ENCODE measurements at regions of chr9 and their contacts with region 1.

Region 1: DNA sequence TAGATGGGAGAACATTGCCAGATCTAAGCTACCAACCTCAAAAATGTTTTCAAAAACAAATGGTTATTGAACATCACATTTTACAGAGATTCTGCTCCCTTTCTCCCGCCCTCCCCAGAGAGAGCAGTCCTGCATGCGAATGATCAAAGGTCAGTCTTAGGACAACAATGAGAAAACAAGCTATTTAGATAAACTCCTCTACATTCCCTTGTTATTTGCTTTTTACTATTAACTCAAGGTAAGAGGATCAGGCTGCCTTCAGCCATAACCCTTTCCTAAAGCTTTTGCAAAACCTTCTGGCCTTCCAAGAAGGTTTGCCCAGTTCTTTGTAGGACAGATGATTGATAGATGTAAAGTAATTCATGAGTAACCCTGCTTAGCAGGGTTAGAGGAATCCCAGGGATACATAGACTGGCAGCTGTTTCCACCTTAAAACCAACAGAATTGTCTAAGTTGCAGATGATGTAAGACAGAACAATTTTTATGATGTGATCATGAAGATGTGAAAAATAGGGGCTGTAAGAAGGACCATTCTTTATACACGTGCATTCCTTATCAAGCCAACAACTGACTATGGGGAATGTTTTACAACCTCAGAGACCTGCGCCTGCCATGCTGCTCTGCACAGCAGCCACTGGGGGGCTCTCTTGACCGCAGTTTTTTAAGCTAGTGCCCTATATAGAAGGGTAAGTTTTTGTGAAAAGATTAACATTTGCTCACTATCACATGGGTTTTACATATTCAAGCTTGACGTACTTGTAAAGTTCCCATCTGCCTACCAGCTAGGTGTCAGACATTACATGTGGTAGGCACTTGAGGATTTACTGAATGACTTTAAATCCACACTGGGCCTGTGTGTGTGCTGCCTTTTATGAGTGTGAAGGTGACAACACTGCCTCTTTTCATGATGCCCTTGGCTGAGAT is 2.3 kb upstream of the ZNF782 start:
- DNase-seq: no peak
- H3K4me3 ChIP-seq: no peak overlapping the region
- H3K27me3 ChIP-seq: no peaks in the 10 kb centered on the region
- CTCF ChIP-seq: peak; percentile 91

Region 2: GRCh38 chr9:96875461-96876364 is 19.1 kb after region 1 on chr9:
- CTCF ChIA-PET with region 1: interaction called, 35 read pairs
- POLR2A ChIA-PET with region 1: no interaction called
- DNase-seq: no peak
- H3K4me3 ChIP-seq: peak overlapping the region; percentile 50
- H3K27me3 ChIP-seq: peaks cover 25% of the 10 kb centered on the region
- CTCF ChIP-seq: peak; percentile 22; the same call in 1 of the 2 replicates

Region 3: DNA sequence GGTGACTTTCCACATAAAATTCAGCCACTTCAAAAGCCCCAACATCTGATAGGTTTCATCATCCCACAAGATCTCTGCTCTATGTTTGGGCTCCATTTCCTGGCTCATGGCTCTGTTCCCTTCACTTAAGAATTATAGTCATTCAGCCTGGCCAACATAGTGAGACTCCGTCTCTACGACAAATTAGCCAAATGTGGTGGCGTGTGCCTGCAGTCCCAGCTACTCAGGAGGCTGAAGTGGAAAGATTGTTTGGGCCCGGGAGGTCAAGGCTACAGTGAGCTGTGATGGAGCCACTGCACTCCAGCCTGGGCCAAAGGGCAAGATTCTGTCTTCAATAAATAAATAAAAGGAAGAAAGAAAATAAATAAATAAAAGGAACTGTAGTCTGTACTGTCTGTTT is 240.2 kb after region 1 on chr9:
- CTCF ChIA-PET with region 1: no interaction called
- POLR2A ChIA-PET with region 1: no interaction called
- DNase-seq: no peak
- H3K4me3 ChIP-seq: no peak overlapping the region
- H3K27me3 ChIP-seq: no peaks in the 10 kb centered on the region
- CTCF ChIP-seq: no peak

Region 4: DNA sequence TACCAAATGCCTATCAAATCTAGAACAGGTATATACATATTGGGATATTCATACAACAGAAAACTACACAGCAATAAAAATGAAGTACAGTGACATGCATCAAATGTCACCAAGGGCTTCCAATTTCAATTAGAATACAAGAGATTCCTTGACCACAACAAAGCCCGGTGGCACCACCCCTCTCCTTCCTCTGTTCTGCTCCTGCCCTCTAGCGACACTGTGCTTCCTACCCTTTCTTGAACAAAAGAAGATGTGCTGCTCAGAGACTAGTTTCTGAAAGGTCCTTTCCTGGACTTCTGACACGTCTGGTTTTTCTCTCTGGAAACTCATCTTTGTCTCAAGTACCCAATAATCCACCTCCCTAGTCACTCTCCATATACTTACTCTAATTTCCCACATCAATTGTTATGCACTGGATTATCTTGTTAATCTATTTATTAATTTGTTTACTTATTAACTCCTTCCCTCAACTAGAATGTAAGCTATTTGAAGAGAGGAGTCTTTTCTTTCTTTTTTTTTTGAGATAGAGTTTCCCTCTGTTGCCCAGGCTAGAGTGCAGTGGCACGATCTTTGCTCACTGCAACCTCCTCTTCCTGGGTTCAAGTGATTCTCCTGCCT is 252.7 kb after region 1 on chr9:
- CTCF ChIA-PET with region 1: interaction called, 15 read pairs
- POLR2A ChIA-PET with region 1: no interaction called
- DNase-seq: no peak
- H3K4me3 ChIP-seq: no peak overlapping the region
- H3K27me3 ChIP-seq: no peaks in the 10 kb centered on the region
- CTCF ChIP-seq: peak; percentile 48

Region 5: DNA sequence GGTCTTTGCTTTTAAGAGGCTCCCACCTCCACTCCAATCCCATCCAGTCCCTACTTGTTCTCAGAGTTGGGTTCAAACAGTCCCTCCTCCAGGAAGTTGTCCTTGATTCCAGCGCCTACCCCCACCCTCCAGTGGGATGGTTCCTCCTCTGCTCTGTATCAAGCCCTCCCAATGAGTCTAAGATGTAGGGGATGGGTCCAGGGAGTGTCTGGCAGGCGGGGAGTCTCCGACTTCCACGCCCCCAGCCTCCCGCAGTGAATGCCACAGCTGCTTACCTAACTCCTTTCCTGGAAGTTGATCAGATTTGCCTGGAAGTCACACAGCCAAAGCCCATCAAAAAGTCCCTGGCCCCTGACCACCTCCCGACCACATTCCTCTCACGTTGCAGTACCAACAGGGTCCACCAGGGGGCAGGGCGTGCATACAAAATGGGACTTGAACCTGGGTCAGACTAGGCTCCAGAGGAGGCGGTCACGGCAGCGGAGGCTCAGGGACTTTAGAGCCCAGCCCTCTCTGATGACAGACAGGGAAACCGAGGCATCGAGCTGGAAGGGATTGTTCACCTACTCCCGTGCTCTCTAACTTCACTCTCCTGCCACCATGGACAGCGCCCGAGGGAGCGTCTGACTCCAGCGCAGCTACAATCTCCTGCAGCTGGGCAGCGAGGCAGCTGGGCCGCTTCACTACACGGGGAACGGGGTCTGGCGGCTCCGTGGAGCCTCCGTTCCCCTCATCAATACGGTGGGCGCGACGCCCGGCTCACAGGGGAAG is 530.3 kb after region 1 on chr9:
- CTCF ChIA-PET with region 1: interaction called, 15 read pairs
- POLR2A ChIA-PET with region 1: no interaction called
- DNase-seq: no peak
- H3K4me3 ChIP-seq: no peak overlapping the region
- H3K27me3 ChIP-seq: peaks cover 2% of the 10 kb centered on the region
- CTCF ChIP-seq: peak; percentile 99

Region 6: GRCh38 chr9:97398999-97399758 is 542.6 kb after region 1 on chr9:
- CTCF ChIA-PET with region 1: interaction called, 39 read pairs
- POLR2A ChIA-PET with region 1: no interaction called
- DNase-seq: no peak
- H3K4me3 ChIP-seq: no peak overlapping the region
- H3K27me3 ChIP-seq: no peaks in the 10 kb centered on the region; the same call in 1 of the 2 replicates
- CTCF ChIP-seq: peak; percentile 98

Region 7: DNA sequence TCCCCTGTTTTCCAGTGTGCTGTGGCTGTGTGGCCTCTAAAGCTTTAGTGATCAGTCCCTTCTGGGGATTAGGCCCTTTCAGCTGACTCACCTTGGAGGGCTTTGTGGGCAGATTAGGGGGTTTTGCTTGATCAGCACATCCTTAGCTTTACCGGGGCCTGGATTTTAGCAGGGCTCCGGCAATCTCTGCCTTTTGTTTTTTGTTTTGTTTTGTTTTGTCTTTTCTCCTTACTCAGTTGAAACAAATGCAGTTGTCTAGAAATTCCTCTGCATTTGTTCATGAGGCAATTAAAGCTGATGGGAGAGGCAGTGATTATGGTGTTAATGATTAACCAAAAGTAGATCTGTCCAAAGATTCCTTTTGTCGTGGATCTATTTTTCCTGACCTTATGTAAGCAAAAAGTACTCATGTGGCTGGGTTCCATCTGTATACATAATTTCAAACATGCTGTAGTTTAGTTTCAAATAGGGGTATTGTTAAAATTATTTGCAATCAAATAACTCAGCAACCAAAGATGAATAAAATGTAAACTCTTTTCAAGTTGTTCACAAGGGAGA is 550.1 kb after region 1 on chr9:
- CTCF ChIA-PET with region 1: interaction called, 27 read pairs
- POLR2A ChIA-PET with region 1: no interaction called
- DNase-seq: no peak
- H3K4me3 ChIP-seq: no peak overlapping the region
- H3K27me3 ChIP-seq: peaks cover 11% of the 10 kb centered on the region
- CTCF ChIP-seq: no peak